ENCODE measurements at regions of chr12 and their contacts with region 1.

Region 1: DNA sequence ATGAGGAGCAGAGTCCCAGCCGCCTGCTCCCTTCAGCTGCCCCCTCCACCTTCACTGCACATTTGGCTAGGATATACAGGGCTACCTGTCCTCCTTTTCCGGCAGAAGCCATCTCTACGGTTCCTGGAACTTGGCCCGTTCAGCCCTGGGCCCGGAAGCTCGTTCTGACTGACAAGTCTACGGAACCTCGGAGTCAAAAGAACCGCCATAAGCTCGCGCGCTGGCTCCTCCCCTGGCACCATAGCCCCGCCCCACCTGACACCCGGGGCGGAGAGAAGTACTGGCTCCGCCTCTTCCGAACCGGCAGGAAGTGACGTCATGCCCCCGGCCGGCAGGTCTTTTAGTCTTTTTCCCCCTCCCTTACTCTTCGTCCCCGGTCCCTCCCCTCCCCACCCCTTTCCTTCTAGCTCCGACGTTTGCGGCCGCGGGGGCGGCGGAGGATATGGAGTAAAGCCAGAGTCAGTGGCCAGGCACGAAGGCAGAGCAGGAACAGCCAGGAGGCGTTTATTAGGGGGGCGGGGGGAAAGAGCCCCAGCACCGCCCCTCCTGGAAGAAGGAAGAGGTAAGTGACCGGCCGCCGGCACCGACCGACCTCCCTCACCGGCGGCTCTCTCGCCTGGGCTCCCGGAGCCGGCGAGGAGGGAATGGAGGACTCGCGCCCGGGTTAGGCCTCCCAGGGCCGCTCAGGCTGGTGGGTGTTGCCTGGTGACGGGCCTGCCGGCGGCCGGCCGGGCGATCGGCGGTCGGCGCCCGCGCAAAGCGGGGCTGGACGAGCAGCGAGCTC is at the starts of genes DEPDC4 and SCYL2:
- DNase-seq: peak; percentile 93 to 98 (median 96)
- H3K4me3 ChIP-seq: peak within 1 kb of the TSS; percentile 26 to 90
- H3K4me3 Mint-ChIP-seq: peak within 1 kb of the TSS; percentile 97 to 100 (median 99)
- H3K27ac ChIP-seq: peak within 1 kb of the TSS; percentile 95
- H3K27ac Mint-ChIP-seq: peak within 1 kb of the TSS; percentile 95 to 100 (median 99)
- H3K4me1 ChIP-seq: peaks cover 46% of the 10 kb centered on the region
- H3K4me1 Mint-ChIP-seq: peaks cover 19 to 44% (median 32%) of the 10 kb centered on the region in 4 donors
- H3K27me3 ChIP-seq: no peaks in the 10 kb centered on the region
- H3K27me3 Mint-ChIP-seq: no peaks in the 10 kb centered on the region
- total RNA-seq, gene DEPDC4: 0.38 to 1.4 TPM
- total RNA-seq, gene SCYL2: 47.8 to 52.5 TPM

Region 2: GRCh38 chr12:100043631-100044030 is 223.4 kb before region 1 on chr12:
- CTCF ChIA-PET with region 1: no interaction called
- POLR2A ChIA-PET with region 1: no interaction called
- intact Hi-C with region 1: no loop called
- DNase-seq: no peak
- H3K4me3 ChIP-seq: no peak overlapping the region
- H3K4me3 Mint-ChIP-seq: no peak overlapping the region
- H3K27ac ChIP-seq: no peak overlapping the region
- H3K27ac Mint-ChIP-seq: no peak overlapping the region
- H3K4me1 ChIP-seq: no peaks in the 10 kb centered on the region
- H3K4me1 Mint-ChIP-seq: peaks cover 0 to 2% (median 0%) of the 10 kb centered on the region in 4 donors
- H3K27me3 ChIP-seq: no peaks in the 10 kb centered on the region
- H3K27me3 Mint-ChIP-seq: no peaks in the 10 kb centered on the region

Region 3: GRCh38 chr12:100142851-100143559 is 124.0 kb before region 1 on chr12 and contains the start of gene BLTP3B:
- CTCF ChIA-PET with region 1: interaction called, 3 read pairs
- POLR2A ChIA-PET with region 1: interaction called, 3 read pairs
- intact Hi-C with region 1: loop called (anchors 1 kb)
- DNase-seq: peak; percentile 81 to 88 (median 85)
- H3K4me3 ChIP-seq: peak within 1 kb of the TSS; percentile 66 to 85
- H3K4me3 Mint-ChIP-seq: peak within 1 kb of the TSS; percentile 89 to 98 (median 96)
- H3K27ac ChIP-seq: peak within 1 kb of the TSS; percentile 85
- H3K27ac Mint-ChIP-seq: peak within 1 kb of the TSS; percentile 90 to 97 (median 97)
- H3K4me1 ChIP-seq: peaks cover 22% of the 10 kb centered on the region
- H3K4me1 Mint-ChIP-seq: peaks cover 28 to 42% (median 34%) of the 10 kb centered on the region in 4 donors
- H3K27me3 ChIP-seq: no peaks in the 10 kb centered on the region
- H3K27me3 Mint-ChIP-seq: no peaks in the 10 kb centered on the region
- total RNA-seq, gene BLTP3B: 16.2 to 16.8 TPM

Region 4: GRCh38 chr12:100399095-100399494 is 132.1 kb after region 1 on chr12:
- CTCF ChIA-PET with region 1: no interaction called
- POLR2A ChIA-PET with region 1: no interaction called
- intact Hi-C with region 1: no loop called
- DNase-seq: no peak
- H3K4me3 ChIP-seq: no peak overlapping the region
- H3K4me3 Mint-ChIP-seq: no peak overlapping the region
- H3K27ac ChIP-seq: no peak overlapping the region
- H3K27ac Mint-ChIP-seq: no peak overlapping the region
- H3K4me1 ChIP-seq: no peaks in the 10 kb centered on the region
- H3K4me1 Mint-ChIP-seq: peaks cover 0 to 2% (median 0%) of the 10 kb centered on the region in 4 donors
- H3K27me3 ChIP-seq: no peaks in the 10 kb centered on the region
- H3K27me3 Mint-ChIP-seq: peaks cover 0 to 3% of the 10 kb centered on the region in 2 donors

Region 5: GRCh38 chr12:101280006-101280505 is 1013.0 kb after region 1 on chr12 and contains the start of gene UTP20:
- CTCF ChIA-PET with region 1: no interaction called
- POLR2A ChIA-PET with region 1: no interaction called
- intact Hi-C with region 1: loop called (anchors 2 kb)
- DNase-seq: peak; percentile 91 to 93 (median 92)
- H3K4me3 ChIP-seq: peak within 1 kb of the TSS; percentile 71 to 93
- H3K4me3 Mint-ChIP-seq: peak within 1 kb of the TSS; percentile 95 to 98 (median 95)
- H3K27ac ChIP-seq: peak within 1 kb of the TSS; percentile 56
- H3K27ac Mint-ChIP-seq: peak within 1 kb of the TSS; percentile 78 to 93 (median 88)
- H3K4me1 ChIP-seq: peaks cover 7% of the 10 kb centered on the region
- H3K4me1 Mint-ChIP-seq: peaks cover 7 to 27% (median 14%) of the 10 kb centered on the region in 4 donors
- H3K27me3 ChIP-seq: peaks cover 6% of the 10 kb centered on the region
- H3K27me3 Mint-ChIP-seq: peaks cover 3 to 9% of the 10 kb centered on the region in 2 donors
- total RNA-seq, gene UTP20: 14.6 to 14.9 TPM